Activated B cell treated with CpG ODN at 0.5 μM for 24 hours (primary cell): ENCODE measurements at regions of chr7 and their contacts with region 1.

Region 1: GRCh38 chr7:18610331-18610948 is 114.9 kb downstream of the HDAC9 start:
- DNase-seq: no peak
- ATAC-seq: peak; percentile 37
- H3K4me3 Mint-ChIP-seq: no peak overlapping the region
- H3K27ac Mint-ChIP-seq: no peak overlapping the region
- H3K4me1 Mint-ChIP-seq: peaks cover 4% of the 10 kb centered on the region
- H3K27me3 Mint-ChIP-seq: no peaks in the 10 kb centered on the region
- CTCF ChIP-seq: no peak

Region 2: GRCh38 chr7:18552943-18553584 is 57.4 kb before region 1 on chr7:
- CTCF ChIA-PET with region 1: no interaction called
- POLR2A ChIA-PET with region 1: no interaction called
- intact Hi-C with region 1: no loop called
- DNase-seq: no peak
- ATAC-seq: peak; percentile 77
- H3K4me3 Mint-ChIP-seq: peak overlapping the region; percentile 57
- H3K27ac Mint-ChIP-seq: peak overlapping the region; percentile 80
- H3K4me1 Mint-ChIP-seq: peaks cover 61% of the 10 kb centered on the region
- H3K27me3 Mint-ChIP-seq: no peaks in the 10 kb centered on the region
- CTCF ChIP-seq: no peak

Region 3: GRCh38 chr7:18623389-18623788 is 12.9 kb after region 1 on chr7:
- CTCF ChIA-PET with region 1: no interaction called
- POLR2A ChIA-PET with region 1: no interaction called
- intact Hi-C with region 1: loop called (anchors 2 kb)
- DNase-seq: no peak
- ATAC-seq: no peak
- H3K4me3 Mint-ChIP-seq: no peak overlapping the region
- H3K27ac Mint-ChIP-seq: no peak overlapping the region
- H3K4me1 Mint-ChIP-seq: peaks cover 2% of the 10 kb centered on the region
- H3K27me3 Mint-ChIP-seq: no peaks in the 10 kb centered on the region
- CTCF ChIP-seq: no peak